Gastrocnemius medialis (tissue), 4 donors: ENCODE measurements at regions of chr11 and their contacts with region 1.

Region 1: DNA sequence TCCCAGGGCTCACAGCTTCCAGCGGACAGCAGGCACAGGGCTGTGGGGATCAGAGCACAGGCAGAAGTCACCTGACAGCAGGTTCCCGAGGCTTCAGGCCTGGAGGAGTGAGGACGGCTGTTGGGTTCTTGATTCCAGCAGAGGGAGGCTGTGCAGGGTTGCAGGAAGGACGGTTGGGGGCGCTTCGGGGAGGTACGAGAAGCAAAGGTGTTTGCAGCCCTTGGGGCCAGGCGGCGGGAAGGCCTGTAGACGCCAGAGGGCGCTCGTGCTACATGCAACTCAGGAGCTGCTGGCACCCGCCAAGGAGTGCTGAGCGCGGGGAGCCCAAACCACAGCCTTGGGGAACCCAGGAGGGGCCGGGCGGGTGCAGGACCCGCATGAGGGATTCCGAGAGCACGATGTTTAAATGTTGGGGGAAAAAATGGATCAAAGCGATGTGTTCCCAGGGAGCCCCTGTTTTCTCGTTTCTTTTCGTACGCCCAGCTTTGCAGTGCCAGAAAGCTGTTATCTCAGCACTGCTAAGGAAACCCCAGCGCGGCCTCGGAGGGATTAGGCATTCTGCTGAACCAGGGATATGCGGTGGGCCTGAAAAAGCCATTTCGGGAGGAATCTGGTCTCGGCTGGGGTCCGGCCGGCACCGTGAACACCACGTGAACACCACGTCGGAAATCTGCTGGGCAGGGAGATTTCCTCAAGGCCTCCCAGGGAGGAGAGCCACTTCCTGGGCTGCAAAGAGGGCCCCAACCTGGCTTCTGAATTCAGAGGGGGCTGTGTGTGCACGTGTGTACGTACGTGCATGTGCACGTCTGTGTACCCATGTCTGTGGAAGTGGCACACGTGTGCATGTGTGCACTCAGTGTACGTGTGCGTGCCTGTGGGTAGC is 88.1 kb downstream of the KCNQ1 start:
- DNase-seq: peak; percentile 69 to 76
- ATAC-seq: peak; percentile 80 to 87
- H3K4me3 ChIP-seq: peak overlapping the region in 3 of 4 donors; percentile 29 to 42 (median 42)
- H3K27ac ChIP-seq: peak overlapping the region in 1 of 4 donors; percentile 24
- H3K4me1 ChIP-seq: peaks cover 6 to 7% of the 10 kb centered on the region in 2 donors
- H3K27me3 ChIP-seq: no peaks in the 10 kb centered on the region
- CTCF ChIP-seq: peak; percentile 98 to 100 (median 99)
- POLR2A ChIP-seq: no peak

Region 2: GRCh38 chr11:2420502-2421225 is 112.3 kb before region 1 on chr11:
- in situ Hi-C with region 1: loop called (anchors 5 to 10 kb)
- intact Hi-C with region 1: no loop called
- DNase-seq: peak; percentile 29 to 45
- ATAC-seq: peak; percentile 78 to 93
- H3K4me3 ChIP-seq: peak overlapping the region in 1 of 4 donors; percentile 41
- H3K27ac ChIP-seq: no peak overlapping the region
- H3K4me1 ChIP-seq: no peaks in the 10 kb centered on the region
- H3K27me3 ChIP-seq: no peaks in the 10 kb centered on the region
- CTCF ChIP-seq: peak; percentile 87 to 97 (median 94)
- POLR2A ChIP-seq: no peak

Region 3: DNA sequence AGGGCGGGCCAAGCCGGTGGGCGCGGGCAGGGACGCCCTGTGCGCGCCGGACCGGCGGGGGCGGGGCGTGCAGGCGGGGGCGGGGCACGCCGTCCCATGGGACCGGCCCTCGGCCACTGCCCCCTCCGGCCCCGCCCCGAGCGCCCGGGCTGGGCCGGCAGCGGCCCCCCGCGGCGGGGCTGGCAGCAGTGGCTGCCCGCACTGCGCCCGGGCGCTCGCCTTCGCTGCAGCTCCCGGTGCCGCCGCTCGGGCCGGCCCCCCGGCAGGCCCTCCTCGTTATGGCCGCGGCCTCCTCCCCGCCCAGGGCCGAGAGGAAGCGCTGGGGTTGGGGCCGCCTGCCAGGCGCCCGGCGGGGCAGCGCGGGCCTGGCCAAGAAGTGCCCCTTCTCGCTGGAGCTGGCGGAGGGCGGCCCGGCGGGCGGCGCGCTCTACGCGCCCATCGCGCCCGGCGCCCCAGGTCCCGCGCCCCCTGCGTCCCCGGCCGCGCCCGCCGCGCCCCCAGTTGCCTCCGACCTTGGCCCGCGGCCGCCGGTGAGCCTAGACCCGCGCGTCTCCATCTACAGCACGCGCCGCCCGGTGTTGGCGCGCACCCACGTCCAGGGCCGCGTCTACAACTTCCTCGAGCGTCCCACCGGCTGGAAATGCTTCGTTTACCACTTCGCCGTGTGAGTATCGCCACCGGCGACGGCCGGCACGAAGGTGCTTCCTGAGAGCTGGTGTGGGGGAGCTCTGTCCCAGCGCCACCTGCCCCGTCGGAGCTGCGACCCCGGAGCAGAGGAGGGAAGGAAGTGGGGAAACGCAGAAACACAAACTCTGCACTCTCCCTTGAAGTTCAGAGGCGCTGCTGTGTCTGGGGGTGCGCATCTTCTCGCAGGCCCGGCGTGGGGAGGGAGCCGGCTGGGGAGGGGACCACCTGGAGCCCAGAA is 87.9 kb before region 1 on chr11 and contains the start of gene KCNQ1:
- in situ Hi-C with region 1: no loop called
- intact Hi-C with region 1: loop called (anchors 5 kb)
- DNase-seq: no peak
- ATAC-seq: peak in 1 of 2 donors; percentile 57
- H3K4me3 ChIP-seq: peak within 1 kb of the TSS; percentile 31 to 49 (median 38)
- H3K27ac ChIP-seq: no peak within 1 kb of the TSS
- H3K4me1 ChIP-seq: no peaks in the 10 kb centered on the region
- H3K27me3 ChIP-seq: peaks cover 25 to 45% (median 42%) of the 10 kb centered on the region in 3 donors
- CTCF ChIP-seq: no peak
- POLR2A ChIP-seq: peak in 1 of 2 donors; percentile 33
- total RNA-seq, gene KCNQ1: 0.15 to 1.00 (median 0.67) TPM

Region 4: DNA sequence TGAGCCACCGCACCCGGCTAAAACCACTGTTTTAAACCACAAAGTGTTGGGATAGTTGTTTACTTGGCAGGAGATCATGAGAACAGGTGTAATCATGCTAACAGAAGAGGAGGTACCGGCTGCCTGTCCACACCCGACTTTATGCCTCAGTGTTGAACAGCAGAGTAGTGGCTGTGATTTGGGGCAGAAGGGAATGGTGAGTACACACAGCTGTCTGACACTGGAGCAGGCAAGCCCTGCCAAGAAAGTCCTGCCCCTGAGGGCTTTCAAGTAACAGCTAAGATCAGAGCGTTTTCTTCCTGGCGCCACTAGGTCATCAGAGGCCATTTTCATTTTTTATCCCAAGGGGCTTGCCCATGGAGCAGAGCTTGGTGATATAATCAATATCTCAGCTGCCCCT is 344.5 kb after region 1 on chr11:
- in situ Hi-C with region 1: loop called in 1 of 4 experiments (anchors 5 kb)
- intact Hi-C with region 1: no loop called
- DNase-seq: no peak
- ATAC-seq: no peak
- H3K4me3 ChIP-seq: no peak overlapping the region
- H3K27ac ChIP-seq: no peak overlapping the region
- H3K4me1 ChIP-seq: peaks cover under 1 to 12% of the 10 kb centered on the region in 2 donors
- H3K27me3 ChIP-seq: peaks cover 0 to 3% (median 0%) of the 10 kb centered on the region in 3 donors
- CTCF ChIP-seq: no peak
- POLR2A ChIP-seq: no peak